RWPE1 (cell line): ENCODE measurements at regions of chr9 and their contacts with region 1.

Region 1: DNA sequence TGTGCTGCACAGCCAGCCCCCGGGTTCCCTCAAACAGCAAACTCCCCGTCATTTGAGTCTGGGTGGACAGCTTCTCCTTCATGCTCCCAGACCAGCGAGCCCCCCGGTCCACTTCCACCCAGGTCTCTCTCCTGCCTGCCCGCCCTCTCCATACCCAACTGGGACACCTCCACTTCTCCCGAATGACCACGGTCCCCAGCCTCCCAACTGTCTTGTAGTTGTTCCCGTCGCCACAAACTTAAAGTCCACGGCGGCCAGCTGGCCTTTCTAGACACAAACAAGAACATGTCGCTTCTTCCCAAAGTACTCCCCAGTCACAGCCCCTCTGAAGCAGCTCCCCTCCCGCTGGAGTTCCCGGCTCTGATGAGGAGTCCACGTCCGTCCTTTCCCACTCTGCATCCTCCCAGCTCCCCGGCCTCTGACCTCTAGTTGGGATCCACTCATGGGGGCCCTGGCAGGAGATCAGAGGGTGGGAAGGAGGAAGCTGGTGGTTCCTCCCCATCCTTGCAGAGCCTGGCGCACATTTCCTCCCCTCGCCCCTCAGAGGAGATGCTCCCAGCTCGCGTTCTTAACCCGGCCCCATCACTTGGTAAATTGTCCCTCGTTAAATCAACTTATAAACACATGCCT is 24.1 kb upstream of the PPP1R26 start:
- DNase-seq: no peak
- H3K27ac ChIP-seq: no peak overlapping the region
- CTCF ChIP-seq: no peak

Region 2: GRCh38 chr9:135474915-135475314 is 19.4 kb after region 1 on chr9:
- CTCF ChIA-PET with region 1: interaction called, 12 read pairs
- POLR2A ChIA-PET with region 1: no interaction called
- DNase-seq: peak; percentile 38
- H3K27ac ChIP-seq: no peak overlapping the region
- CTCF ChIP-seq: no peak; the same call in 1 of the 2 replicates